Gastrocnemius medialis (tissue), 4 donors: ENCODE measurements at regions of chr4 and their contacts with region 1.

Region 1: DNA sequence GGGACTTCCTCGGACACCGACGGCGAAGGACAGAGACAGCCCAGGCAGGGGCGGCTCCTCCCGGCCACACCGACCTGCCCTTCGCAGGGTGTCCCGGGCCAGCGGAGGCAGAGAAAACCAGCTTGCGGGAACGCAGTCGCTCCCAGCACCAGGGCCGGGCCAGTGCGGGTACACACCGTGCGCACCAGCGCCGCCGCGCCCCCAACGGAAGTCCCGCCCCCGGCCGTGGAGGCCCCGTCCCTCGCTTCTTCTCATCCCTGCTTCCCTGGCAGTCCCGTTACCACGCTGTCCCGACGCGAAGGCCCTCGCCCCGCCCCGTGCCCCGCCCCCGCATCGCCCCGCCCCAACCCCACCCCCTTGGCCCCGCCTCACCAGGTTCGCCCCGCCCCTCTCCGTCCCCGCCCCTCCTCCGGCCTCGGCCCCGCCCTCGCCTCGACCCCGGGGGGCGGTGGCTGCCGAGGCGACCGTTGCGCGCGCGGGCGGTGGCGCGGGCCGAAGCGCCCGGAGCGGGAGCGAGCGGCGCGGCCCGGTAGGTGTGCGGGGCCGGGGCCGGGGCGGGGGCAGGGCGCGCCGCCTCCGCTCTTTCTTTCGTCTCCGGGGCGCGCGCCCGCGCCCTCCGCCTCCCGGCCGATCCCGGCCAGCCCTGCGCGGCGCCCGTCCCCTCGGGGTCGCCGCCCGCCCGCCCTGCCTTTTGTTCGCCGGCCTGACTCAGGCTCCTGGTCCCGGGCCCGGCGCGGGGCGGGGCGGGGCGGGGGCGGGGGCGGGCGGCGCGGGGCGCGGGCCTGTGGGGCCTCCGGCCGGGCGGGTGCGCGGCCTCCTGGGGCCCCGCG is at the start of gene RGS12:
- DNase-seq: peak; percentile 96 to 97
- ATAC-seq: peak; percentile 80 to 88
- H3K4me3 ChIP-seq: peak within 1 kb of the TSS; percentile 81 to 91 (median 84)
- H3K27ac ChIP-seq: peak within 1 kb of the TSS; percentile 99 to 100 (median 99)
- H3K4me1 ChIP-seq: peaks cover 17 to 22% of the 10 kb centered on the region in 2 donors
- H3K27me3 ChIP-seq: no peaks in the 10 kb centered on the region
- CTCF ChIP-seq: no peak
- POLR2A ChIP-seq: peak; percentile 98
- total RNA-seq, gene RGS12: 9.1 to 22.6 (median 21.1) TPM

Region 2: DNA sequence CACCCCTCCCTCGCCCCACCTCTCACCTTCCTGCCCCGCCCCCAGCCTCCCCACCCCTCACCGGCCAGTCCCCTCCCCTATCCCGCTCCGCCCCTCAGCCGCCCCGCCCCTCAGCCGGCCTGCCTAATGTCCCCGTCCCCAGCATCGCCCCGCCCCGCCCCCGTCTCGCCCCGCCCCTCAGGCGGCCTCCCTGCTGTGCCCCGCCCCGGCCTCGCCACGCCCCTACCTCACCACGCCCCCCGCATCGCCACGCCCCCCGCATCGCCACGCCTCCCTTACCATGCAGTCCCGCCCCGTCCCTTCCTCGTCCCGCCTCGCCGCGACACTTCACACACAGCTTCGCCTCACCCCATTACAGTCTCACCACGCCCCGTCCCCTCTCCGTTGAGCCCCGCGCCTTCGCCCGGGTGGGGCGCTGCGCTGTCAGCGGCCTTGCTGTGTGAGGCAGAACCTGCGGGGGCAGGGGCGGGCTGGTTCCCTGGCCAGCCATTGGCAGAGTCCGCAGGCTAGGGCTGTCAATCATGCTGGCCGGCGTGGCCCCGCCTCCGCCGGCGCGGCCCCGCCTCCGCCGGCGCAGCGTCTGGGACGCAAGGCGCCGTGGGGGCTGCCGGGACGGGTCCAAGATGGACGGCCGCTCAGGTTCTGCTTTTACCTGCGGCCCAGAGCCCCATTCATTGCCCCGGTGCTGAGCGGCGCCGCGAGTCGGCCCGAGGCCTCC is 218.5 kb before region 1 on chr4 and contains the starts of genes HTT and HTT-AS:
- in situ Hi-C with region 1: no loop called
- intact Hi-C with region 1: loop called (anchors 2 kb)
- DNase-seq: peak; percentile 95
- ATAC-seq: peak; percentile 87 to 92
- H3K4me3 ChIP-seq: peak within 1 kb of the TSS; percentile 74 to 90 (median 80)
- H3K27ac ChIP-seq: peak within 1 kb of the TSS; percentile 86 to 100 (median 96)
- H3K4me1 ChIP-seq: peaks cover 19 to 36% of the 10 kb centered on the region in 2 donors
- H3K27me3 ChIP-seq: no peaks in the 10 kb centered on the region
- CTCF ChIP-seq: no peak
- POLR2A ChIP-seq: peak; percentile 46 to 63
- total RNA-seq, gene HTT: 23.5 to 73.0 (median 51.1) TPM
- total RNA-seq, gene HTT-AS: not detected

Region 3: DNA sequence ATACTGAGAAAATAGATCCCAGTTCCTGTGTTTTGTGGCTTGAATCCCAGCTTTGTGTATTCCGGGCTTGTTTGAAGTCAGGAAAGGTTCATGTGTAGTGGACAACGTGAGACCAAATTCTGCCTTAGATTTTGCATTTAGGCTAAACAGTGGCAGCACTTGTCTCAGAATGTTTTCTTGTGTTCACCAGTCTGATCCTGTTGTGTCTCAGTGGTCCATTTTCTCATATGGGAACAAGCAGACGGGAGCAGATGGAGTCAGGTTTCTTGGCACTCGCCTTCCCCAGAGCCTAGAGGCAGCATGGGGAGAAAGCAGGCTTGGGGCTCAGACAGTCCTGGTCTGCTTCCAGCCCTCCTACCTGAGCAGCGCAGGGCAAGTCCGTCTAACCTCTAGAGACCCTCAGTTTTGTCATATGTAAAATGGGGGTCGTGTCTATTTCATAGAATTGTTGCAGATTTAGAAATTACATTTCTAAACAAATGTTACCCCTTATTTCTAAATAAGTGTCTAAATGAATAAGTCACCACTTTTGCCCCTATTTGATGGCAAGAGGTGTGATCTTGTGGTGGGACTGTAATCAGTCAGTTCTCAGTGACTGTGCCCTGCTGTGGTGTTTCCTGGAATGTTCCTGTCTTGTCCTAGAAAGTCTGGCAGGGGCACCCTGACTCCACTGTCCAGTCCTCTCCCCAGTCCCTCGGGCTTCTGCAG is 72.2 kb before region 1 on chr4:
- in situ Hi-C with region 1: no loop called
- intact Hi-C with region 1: loop called (anchors 2 kb)
- DNase-seq: peak; percentile 40 to 75
- ATAC-seq: peak; percentile 56 to 71
- H3K4me3 ChIP-seq: no peak overlapping the region
- H3K27ac ChIP-seq: peak overlapping the region; percentile 69 to 81 (median 76)
- H3K4me1 ChIP-seq: peaks cover 18 to 23% of the 10 kb centered on the region in 2 donors
- H3K27me3 ChIP-seq: no peaks in the 10 kb centered on the region
- CTCF ChIP-seq: no peak
- POLR2A ChIP-seq: no peak

Region 4: DNA sequence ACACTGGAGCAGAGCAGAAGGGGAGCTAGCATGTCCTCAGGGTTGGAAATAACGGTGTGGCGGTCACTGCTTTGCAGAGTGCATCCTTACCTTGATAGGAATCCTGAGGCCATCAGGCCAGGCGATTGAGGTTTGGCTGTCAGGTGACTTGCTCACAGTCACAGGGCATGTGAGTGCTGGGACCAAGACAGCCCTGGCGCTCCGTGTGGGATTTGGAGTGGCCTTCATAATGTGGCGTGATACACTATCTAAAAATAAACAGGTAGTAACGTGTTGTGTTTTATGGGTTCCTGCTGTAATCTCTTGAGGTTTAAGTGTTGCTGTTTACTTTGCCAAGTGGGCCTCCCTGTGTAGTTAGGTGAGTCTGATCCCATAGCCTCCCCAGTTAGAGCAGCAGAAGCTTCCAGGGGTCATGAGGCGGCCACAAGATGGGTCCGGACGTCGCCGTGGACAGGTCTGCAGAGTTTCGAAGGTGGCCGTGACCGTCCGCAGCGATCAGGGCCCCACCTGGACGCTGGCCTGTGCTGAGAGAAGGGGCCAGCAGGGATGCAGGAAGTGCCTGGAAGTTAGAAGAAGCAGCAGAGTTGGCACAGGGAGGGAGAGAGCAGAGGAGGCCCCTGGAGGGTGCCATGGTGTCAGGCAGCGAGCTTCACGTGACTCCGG is 27.7 kb after region 1 on chr4:
- in situ Hi-C with region 1: no loop called
- intact Hi-C with region 1: loop called (anchors 1 kb)
- DNase-seq: peak; percentile 89 to 90
- ATAC-seq: peak; percentile 92 to 93
- H3K4me3 ChIP-seq: peak overlapping the region in 1 of 4 donors; percentile 3
- H3K27ac ChIP-seq: peak overlapping the region; percentile 87 to 96 (median 93)
- H3K4me1 ChIP-seq: peaks cover 30 to 42% of the 10 kb centered on the region in 2 donors
- H3K27me3 ChIP-seq: no peaks in the 10 kb centered on the region
- CTCF ChIP-seq: no peak
- POLR2A ChIP-seq: peak in 1 of 2 donors; percentile 62

Region 5: GRCh38 chr4:3461478-3462291 is 168.9 kb after region 1 on chr4:
- in situ Hi-C with region 1: no loop called
- intact Hi-C with region 1: loop called (anchors 5 kb)
- DNase-seq: peak; percentile 70 to 95
- ATAC-seq: peak; percentile 43 to 53
- H3K4me3 ChIP-seq: no peak overlapping the region
- H3K27ac ChIP-seq: peak overlapping the region; percentile 94 to 98 (median 94)
- H3K4me1 ChIP-seq: peaks cover 31 to 48% of the 10 kb centered on the region in 2 donors
- H3K27me3 ChIP-seq: no peaks in the 10 kb centered on the region
- CTCF ChIP-seq: no peak
- POLR2A ChIP-seq: peak in 1 of 2 donors; percentile 26

Region 6: DNA sequence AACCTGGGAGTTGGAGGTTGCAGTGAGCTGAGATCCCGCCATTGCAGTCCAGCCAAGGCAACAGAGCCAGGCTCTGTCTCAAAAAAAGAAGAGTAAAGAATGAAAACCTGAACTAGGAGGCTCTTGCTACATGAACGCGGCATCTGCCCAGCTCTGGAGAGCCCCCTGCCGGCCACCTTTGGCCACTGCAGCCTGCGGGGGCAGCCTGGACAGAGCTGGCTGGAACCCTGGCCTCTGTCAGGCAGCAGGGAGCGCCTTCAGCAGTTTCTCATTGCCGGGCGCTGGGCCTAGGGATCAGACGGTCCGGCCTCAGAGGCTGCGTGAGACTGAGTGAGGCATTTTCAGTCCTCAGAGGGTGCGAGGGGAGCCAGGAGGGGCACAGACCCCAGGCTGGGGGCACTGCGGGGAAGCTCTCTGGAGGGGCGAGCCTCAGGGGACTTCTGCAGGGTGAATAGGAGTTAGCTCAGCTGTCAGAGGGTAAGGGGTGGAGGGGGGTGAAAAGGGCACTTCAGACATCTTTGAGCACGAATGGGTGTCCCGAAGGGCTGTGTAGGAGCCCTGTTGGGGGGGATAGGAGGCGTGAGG is 187.8 kb after region 1 on chr4:
- in situ Hi-C with region 1: no loop called
- intact Hi-C with region 1: loop called (anchors 5 kb)
- DNase-seq: peak; percentile 47 to 82
- ATAC-seq: peak in 1 of 2 donors; percentile 22
- H3K4me3 ChIP-seq: no peak overlapping the region
- H3K27ac ChIP-seq: peak overlapping the region; percentile 99 to 100 (median 99)
- H3K4me1 ChIP-seq: peaks cover 49 to 57% of the 10 kb centered on the region in 2 donors
- H3K27me3 ChIP-seq: no peaks in the 10 kb centered on the region
- CTCF ChIP-seq: peak; percentile 98 to 100 (median 99)
- POLR2A ChIP-seq: peak in 1 of 2 donors; percentile 14